ENCODE measurements at regions of chr3 and their contacts with region 1.

Region 1: GRCh38 chr3:94062431-94063404 is at the starts of genes DHFR2 and NSUN3:
- DNase-seq: peak; percentile 89
- ATAC-seq: peak; percentile 99
- H3K4me3 ChIP-seq: peak within 1 kb of the TSS; percentile 76 to 98
- H3K27ac ChIP-seq: peak within 1 kb of the TSS; percentile 97
- H3K4me1 ChIP-seq: peaks cover 14% of the 10 kb centered on the region
- H3K27me3 ChIP-seq: no peaks in the 10 kb centered on the region
- CTCF ChIP-seq: no peak
- total RNA-seq, gene DHFR2: 2.7 TPM
- total RNA-seq, gene NSUN3: 14.4 TPM

Region 2: DNA sequence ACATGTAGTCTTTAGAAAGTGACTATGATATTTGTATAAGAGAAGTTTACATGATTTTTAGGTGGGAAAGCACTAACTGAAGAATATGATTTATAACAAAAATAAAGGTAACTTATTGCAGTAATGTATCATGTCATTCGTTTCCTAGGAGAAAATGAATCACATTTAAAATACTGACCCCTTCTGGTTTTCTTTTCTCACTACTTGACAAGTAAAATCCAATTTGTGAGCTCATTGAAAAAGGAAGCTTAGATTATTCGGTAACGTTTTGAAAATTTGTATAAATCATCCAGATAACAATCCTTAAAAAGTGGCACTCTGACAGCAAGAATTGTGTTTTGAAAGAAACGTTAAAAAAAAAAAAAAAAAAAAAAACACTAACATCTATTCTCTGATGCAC is 39.1 kb after region 1 on chr3:
- CTCF ChIA-PET with region 1: interaction called, 11 read pairs
- POLR2A ChIA-PET with region 1: no interaction called
- in situ Hi-C with region 1: no loop called
- intact Hi-C with region 1: no loop called
- DNase-seq: peak; percentile 2
- ATAC-seq: no peak
- H3K4me3 ChIP-seq: no peak overlapping the region
- H3K27ac ChIP-seq: no peak overlapping the region
- H3K4me1 ChIP-seq: no peaks in the 10 kb centered on the region
- H3K27me3 ChIP-seq: no peaks in the 10 kb centered on the region
- CTCF ChIP-seq: peak; percentile 41; the same call in 1 of the 2 replicates

Region 3: DNA sequence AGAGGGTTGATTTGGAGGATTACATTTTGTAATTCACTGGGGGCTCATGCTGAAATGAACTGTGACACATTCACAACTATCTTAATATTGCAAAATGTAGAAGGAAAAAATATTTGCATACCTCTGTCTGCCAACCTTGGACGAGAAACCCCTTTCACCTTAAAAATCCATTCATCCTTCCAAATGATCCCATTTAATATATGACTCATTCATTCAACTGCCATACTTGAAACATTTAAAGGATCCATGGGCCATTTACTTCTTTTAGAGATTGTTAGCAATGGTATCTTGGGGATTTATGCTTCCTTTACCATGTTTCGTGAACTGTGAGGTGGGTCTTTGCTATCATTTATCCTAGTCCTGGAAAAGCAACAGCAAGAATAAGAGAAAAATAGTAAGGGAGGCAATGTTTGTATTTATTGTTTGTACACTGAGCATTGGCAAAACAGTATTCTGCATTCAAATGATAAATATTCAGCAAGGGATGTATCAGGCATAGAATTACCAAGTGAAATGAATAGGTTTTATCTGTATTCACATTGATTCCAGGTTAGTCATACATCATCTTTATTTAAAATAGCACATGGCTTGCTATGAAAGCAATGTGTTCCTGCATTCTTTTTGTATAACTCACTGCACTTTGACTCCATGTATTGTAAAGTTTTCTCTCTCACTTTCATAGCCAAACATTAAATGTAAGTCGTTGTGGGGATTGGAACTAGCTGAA is 378.2 kb after region 1 on chr3:
- CTCF ChIA-PET with region 1: no interaction called
- POLR2A ChIA-PET with region 1: no interaction called
- in situ Hi-C with region 1: no loop called
- intact Hi-C with region 1: no loop called
- DNase-seq: no peak
- ATAC-seq: no peak
- H3K4me3 ChIP-seq: no peak overlapping the region
- H3K27ac ChIP-seq: no peak overlapping the region
- H3K4me1 ChIP-seq: no peaks in the 10 kb centered on the region
- H3K27me3 ChIP-seq: no peaks in the 10 kb centered on the region
- CTCF ChIP-seq: no peak

Measured in Panc1 (cell line).